ENCODE measurements at regions of chr1 and their contacts with region 1.

Region 1: GRCh38 chr1:189323091-189323490 is 1154.6 kb downstream of the BRINP3 start:
- DNase-seq: no peak
- H3K4me3 Mint-ChIP-seq: no peak overlapping the region
- H3K27ac Mint-ChIP-seq: no peak overlapping the region
- H3K4me1 Mint-ChIP-seq: no peaks in the 10 kb centered on the region
- H3K27me3 Mint-ChIP-seq: no peaks in the 10 kb centered on the region
- CTCF ChIP-seq: no peak

Region 2: DNA sequence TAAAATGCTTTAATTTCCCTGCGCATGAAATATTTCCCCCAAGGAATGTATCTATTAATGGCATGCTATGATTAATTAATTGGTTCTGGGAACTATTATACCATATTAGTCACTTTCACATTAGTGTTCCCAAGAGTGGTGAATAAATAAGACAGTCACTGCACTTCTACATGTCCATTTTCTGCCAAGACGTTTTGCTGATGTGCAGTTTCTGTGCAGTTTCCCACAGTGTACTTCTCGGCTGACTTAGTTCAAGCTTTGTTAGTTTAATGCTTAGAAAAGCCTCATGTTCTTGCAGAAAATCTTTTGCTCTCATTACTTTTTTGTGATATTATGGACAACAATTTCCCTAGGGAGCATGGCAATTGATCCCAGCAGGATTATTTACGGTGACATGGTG is 140.1 kb after region 1 on chr1:
- CTCF ChIA-PET with region 1: no interaction called
- intact Hi-C with region 1: loop called (anchors 2 kb)
- DNase-seq: no peak
- H3K4me3 Mint-ChIP-seq: no peak overlapping the region
- H3K27ac Mint-ChIP-seq: no peak overlapping the region
- H3K4me1 Mint-ChIP-seq: no peaks in the 10 kb centered on the region
- H3K27me3 Mint-ChIP-seq: no peaks in the 10 kb centered on the region
- CTCF ChIP-seq: no peak

Measured in Calu3 (cell line).